ENCODE measurements at regions of chr12 and their contacts with region 1.

Region 1: DNA sequence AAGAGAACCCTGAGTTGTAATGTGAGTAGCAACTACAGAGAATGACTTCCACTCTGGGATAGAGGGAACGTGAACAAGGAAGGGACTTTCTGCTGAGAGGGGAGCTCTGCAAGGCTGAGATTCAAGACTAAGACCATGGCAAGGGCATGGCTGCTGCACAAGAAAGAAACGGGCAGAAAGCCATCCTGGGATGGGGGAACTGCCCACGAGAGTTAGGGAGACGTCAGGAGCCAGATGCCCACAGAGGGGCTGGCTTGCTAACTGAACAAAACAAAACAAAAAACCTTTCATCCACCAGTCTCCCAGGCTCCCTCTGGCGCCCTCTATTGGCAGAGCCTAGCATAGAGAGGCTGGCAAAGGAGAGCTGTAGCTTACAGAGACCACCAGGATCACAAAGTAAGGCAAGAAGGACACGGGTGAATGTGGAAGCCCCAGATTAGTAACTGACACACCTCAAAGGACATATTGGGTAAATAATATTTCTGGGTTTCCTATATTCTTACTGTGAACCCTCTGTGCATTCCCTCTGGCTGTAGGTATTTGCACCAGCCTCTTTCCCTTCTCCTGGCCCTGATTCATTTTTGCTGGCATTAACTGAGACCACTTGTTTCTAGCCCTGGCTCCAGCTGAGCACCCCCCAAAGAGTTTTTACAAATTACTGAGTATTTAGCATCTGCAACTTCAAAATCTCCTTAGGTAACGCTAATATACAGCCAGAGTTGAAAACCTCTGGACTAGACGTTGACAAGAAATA is 338.3 kb downstream of the EMP1 start:
- DNase-seq: peak; percentile 70
- ATAC-seq: no peak
- H3K4me3 Mint-ChIP-seq: no peak overlapping the region
- H3K27ac Mint-ChIP-seq: no peak overlapping the region
- H3K4me1 Mint-ChIP-seq: peaks cover 2% of the 10 kb centered on the region
- H3K27me3 Mint-ChIP-seq: peaks cover 3% of the 10 kb centered on the region
- CTCF ChIP-seq: peak; percentile 76

Region 2: GRCh38 chr12:13278249-13278787 is 256.5 kb before region 1 on chr12:
- CTCF ChIA-PET with region 1: interaction called, 4 read pairs
- POLR2A ChIA-PET with region 1: no interaction called
- intact Hi-C with region 1: loop called (anchors 5 kb)
- DNase-seq: peak; percentile 71
- ATAC-seq: peak; percentile 92
- H3K4me3 Mint-ChIP-seq: no peak overlapping the region
- H3K27ac Mint-ChIP-seq: no peak overlapping the region
- H3K4me1 Mint-ChIP-seq: peaks cover 2% of the 10 kb centered on the region
- H3K27me3 Mint-ChIP-seq: peaks cover 33% of the 10 kb centered on the region
- CTCF ChIP-seq: peak; percentile 98

Region 3: DNA sequence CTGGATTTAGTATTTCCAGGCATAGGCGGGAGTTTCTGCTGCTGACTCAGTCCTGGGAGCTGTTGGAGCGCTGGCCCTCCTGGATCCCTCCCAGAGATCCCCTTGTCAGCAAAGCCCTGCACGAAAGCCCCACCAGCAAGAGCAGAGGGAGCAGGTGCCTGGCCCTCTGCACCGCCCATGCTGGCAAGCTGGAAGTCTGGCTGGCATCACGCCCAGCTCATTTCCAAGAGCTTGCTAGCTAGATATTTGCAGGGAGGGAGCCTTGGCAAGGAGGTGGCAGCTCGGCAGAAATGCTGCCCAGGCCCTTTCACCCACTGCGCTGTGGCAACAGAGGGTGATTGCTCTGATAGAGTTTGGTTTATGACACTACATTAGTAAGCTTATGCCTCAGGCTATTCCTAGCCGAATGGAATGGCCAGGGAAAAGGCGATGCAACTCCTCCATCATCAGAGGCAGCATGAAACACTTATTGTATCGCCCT is 144.4 kb before region 1 on chr12:
- CTCF ChIA-PET with region 1: no interaction called
- POLR2A ChIA-PET with region 1: no interaction called
- intact Hi-C with region 1: no loop called
- DNase-seq: no peak
- ATAC-seq: no peak
- H3K4me3 Mint-ChIP-seq: no peak overlapping the region
- H3K27ac Mint-ChIP-seq: no peak overlapping the region
- H3K4me1 Mint-ChIP-seq: no peaks in the 10 kb centered on the region
- H3K27me3 Mint-ChIP-seq: peaks cover under 1% of the 10 kb centered on the region
- CTCF ChIP-seq: no peak

Region 4: DNA sequence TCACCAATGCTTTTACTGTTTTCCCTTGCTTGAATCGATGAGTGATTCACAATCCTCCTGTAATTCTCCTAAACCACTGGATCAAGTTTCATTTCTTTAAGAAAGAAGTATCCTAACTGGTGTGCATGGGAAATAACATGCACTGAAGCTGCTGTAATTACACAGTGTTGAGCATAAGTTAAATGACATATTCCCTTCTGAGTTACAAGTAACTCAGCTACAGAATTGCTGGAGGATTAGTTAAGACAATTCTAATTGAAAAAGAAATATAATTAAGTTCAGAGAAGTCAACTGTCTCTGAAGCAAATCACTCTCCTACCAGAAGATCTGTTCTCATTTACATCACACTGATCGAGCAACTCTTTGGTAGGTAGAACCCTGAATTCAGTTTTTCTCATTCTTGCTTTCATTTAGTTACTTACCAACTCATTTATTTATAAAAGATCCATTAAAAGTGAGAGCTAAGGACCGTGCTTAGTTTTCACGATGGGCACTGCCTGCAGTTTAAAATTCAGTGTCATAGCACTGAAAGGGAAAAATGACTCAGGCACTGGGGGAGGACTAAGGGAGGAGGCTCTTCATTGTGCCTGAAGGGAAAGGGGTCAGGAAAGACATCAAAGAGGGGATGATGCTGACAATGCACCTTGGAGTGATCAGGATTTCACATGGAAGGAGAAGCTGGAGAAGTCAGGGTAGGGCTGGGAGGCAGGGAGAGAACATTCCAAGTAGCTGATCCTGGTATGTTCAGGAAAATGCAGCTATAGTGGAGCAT is 11.1 kb before region 1 on chr12:
- CTCF ChIA-PET with region 1: interaction called, 12 read pairs
- POLR2A ChIA-PET with region 1: no interaction called
- intact Hi-C with region 1: no loop called
- DNase-seq: no peak
- ATAC-seq: no peak
- H3K4me3 Mint-ChIP-seq: no peak overlapping the region
- H3K27ac Mint-ChIP-seq: no peak overlapping the region
- H3K4me1 Mint-ChIP-seq: no peaks in the 10 kb centered on the region
- H3K27me3 Mint-ChIP-seq: peaks cover 15% of the 10 kb centered on the region
- CTCF ChIP-seq: no peak